WTC11 (cell line): ENCODE measurements at regions of chr18 and their contacts with region 1.

Region 1: GRCh38 chr18:57437766-57438671 is 2.8 kb downstream of the ONECUT2 start:
- DNase-seq: peak; percentile 92
- ATAC-seq: peak; percentile 54
- H3K4me3 Mint-ChIP-seq: peak overlapping the region; percentile 83
- H3K27ac Mint-ChIP-seq: no peak overlapping the region
- H3K4me1 Mint-ChIP-seq: peaks cover 64% of the 10 kb centered on the region
- H3K27me3 Mint-ChIP-seq: peaks cover 99% of the 10 kb centered on the region
- CTCF ChIP-seq: peak; percentile 63

Region 2: DNA sequence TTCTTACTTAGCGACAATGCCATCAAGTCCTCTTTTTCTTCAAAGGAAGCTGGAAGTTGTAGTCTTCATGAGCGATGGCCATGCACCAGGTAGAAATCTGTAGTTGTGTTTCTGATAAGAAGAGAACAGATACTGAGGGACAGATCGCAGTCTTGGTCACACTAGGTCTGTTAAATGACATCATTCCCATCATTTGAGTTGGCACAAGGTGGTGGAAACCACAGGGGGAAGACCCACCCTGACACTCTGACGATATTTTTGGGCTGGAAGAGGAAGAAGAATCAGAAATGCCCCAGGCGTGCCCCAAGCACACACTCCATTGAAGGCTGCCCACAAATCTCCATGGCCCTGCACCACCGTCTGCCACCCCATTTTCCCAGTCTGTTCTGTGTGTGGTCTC is 380.1 kb before region 1 on chr18:
- CTCF ChIA-PET with region 1: no interaction called
- POLR2A ChIA-PET with region 1: no interaction called
- DNase-seq: no peak
- ATAC-seq: no peak
- H3K4me3 Mint-ChIP-seq: no peak overlapping the region
- H3K27ac Mint-ChIP-seq: no peak overlapping the region
- H3K4me1 Mint-ChIP-seq: peaks cover 6% of the 10 kb centered on the region
- H3K27me3 Mint-ChIP-seq: 0 out of 2 replicates have a peak, but pooled peaks cover 3% of the 10 kb centered on the region
- CTCF ChIP-seq: no peak

Region 3: DNA sequence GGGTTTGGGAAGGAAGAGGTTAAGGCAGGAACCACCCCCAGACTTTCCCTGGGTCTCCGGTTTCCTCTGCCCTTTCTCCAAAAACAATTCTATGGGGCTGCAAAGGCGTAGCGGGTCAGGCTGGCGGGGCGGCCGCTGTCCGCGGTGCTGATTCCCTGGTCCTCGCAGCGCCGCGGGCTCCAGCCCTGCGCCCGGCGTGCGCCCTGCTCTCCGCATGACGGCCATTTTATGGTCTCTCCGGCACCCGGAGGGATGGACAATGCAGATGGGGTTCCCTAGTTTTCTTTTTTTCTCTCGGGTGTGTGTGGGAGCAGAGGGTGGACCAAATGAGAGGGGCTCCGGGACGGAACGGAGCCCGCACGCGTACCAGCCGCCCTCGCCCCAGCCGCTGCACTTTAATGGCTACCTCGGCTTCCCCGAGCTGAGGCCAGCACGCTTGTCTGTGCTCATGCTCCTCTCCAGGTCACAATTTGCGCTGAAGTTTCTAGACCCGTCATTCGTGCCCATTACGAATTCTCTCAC is 84.0 kb before region 1 on chr18:
- CTCF ChIA-PET with region 1: interaction called, 11 read pairs
- POLR2A ChIA-PET with region 1: interaction called, 3 read pairs
- DNase-seq: peak; percentile 85
- ATAC-seq: peak; percentile 87
- H3K4me3 Mint-ChIP-seq: peak overlapping the region; percentile 94
- H3K27ac Mint-ChIP-seq: no peak overlapping the region; the same call in 1 of the 2 replicates
- H3K4me1 Mint-ChIP-seq: peaks cover 22% of the 10 kb centered on the region
- H3K27me3 Mint-ChIP-seq: peaks cover 40% of the 10 kb centered on the region
- CTCF ChIP-seq: no peak

Region 4: GRCh38 chr18:57427429-57428181 is 10.4 kb before region 1 on chr18:
- CTCF ChIA-PET with region 1: interaction called, 35 read pairs
- POLR2A ChIA-PET with region 1: no interaction called
- DNase-seq: peak; percentile 52
- ATAC-seq: peak; percentile 63
- H3K4me3 Mint-ChIP-seq: peak overlapping the region; percentile 68
- H3K27ac Mint-ChIP-seq: no peak overlapping the region
- H3K4me1 Mint-ChIP-seq: peaks cover 37% of the 10 kb centered on the region
- H3K27me3 Mint-ChIP-seq: peaks cover 86% of the 10 kb centered on the region
- CTCF ChIP-seq: no peak